ENCODE measurements at regions of chr7 and their contacts with region 1.

Region 1: GRCh38 chr7:15015545-15016326 is 113.2 kb upstream of the DGKB start:
- DNase-seq: no peak
- ATAC-seq: peak; percentile 97

Region 2: DNA sequence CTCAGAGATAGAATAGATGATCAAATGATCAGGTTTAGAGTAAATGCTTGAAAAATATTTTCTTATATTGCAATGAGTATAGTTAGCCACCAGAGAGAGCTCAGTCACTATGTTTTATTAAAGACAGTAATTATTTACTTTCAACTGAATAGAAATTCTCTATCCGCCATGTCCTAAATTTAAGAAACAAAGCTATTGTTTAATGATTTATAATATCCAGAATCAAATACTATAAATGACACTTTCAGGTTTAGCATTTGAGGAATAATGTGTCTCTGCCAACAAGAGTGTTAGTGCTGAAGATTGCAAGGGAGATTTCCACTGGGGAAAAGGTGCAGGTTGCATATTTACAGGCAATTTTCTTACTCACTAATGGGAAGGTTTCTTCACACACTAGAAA is 297.9 kb before region 1 on chr7:
- intact Hi-C with region 1: loop called (anchors 5 kb)
- DNase-seq: no peak
- ATAC-seq: peak; percentile 81

Region 3: DNA sequence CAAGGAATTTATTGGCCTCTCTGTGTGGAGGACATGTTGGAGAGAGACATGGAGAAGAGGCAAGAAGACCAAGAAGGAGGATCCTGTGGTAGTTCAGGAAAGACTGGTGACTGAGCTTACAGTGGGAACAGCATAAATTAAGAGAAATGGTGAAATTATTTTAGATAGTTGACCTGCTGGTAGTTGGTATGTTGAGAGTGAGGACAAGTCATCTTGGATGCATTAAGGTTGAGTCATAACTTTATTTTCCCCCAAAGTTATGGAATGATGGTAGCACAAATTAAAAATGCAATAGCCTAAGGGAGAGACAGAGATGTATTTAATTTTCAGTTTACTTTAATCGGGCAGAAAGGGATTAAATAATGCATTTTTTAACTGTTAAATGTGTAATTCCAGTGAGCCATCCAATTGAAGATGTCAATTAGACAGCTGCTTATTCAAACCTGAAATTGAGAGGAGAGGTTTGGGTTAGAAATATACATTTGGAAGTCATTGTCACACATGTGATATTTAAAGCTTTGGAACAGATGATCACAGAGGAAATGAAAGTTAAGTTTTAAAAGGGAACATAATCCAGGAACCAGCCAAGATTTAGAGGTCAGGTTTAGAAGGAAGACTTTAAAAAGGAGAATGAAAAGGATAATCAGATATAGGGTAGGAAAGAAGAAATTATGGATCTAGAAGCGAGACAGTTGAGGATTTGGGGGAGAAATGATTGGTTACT is 193.8 kb before region 1 on chr7:
- intact Hi-C with region 1: loop called (anchors 10 kb)
- DNase-seq: no peak
- ATAC-seq: no peak

Region 4: DNA sequence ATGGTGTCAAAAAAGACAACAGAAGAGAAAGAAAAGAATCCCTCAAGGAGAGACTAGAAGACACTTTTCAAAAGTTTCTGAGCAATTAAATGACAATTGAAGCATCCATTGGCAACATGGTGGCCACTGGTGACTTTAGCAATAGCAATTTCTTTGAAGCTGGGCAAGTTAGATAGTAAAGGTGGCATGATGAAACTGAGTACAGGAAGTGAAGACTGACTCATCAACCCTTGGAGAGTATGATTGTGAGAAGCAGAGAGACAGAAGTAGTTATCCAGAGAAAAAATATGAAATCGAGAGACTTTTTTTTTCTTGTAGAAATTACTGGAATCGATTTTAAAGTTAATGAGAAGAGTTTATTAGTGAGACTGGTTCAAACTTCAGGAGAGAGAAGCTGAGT is 165.7 kb before region 1 on chr7:
- intact Hi-C with region 1: no loop called
- DNase-seq: no peak
- ATAC-seq: no peak